ENCODE measurements at regions of chr6 and their contacts with region 1.

Region 1: DNA sequence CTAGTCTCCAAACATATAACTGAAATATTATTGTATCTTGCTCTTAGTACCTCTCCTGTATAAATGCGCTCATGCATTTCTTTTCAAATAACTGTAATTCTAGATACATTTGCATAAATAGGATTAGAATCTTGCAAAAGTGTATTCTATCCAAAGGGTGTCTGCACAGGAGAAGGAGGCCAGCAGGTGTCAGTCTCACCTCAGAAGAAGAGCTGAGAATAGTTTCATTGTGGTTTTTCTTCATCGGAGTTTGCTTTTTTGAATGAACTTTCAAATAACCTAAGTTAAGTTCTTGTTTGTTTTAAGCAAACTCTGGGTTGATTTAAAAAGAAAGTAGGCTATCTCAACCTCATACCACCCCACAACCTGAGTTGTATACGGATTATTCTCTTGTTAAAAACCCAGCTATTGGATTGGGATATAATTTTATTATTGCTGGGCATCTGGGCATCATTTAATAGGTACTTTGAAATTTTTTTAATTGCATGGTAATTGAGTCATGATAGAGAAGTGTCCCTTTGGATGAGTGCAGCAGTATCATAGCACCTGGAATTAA is 125.0 kb upstream of the MLIP start:
- DNase-seq: peak; percentile 53
- H3K4me3 ChIP-seq: no peak overlapping the region
- H3K27ac ChIP-seq: peak overlapping the region in 1 of 4 donors; percentile 5
- H3K4me1 ChIP-seq: peaks cover 0 to 14% (median 5%) of the 10 kb centered on the region in 4 donors
- H3K27me3 ChIP-seq: no peaks in the 10 kb centered on the region
- CTCF ChIP-seq: peak; percentile 61 to 83 (median 77)
- EP300 ChIP-seq: no peak
- POLR2A ChIP-seq: no peak

Region 2: DNA sequence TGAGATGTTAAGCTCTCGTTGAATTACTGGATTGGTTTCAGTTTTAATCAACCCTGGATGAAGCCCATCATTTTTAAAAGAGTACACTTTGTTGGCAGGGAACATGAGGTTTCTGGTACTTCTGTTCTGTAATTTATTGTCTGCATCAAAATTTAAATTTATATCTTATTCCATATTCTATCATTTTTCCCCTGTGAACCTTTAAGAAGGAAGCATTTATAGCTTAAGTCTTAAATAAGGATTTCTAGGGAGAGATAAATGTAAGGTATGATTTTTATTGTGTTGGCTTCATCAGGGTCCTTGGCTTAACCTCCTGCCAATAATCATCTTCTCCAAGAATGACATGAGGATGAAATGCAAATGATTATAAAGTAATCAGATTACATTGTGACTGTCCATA is 165.6 kb after region 1 on chr6:
- in situ Hi-C with region 1: no loop called
- intact Hi-C with region 1: no loop called
- DNase-seq: no peak
- H3K4me3 ChIP-seq: no peak overlapping the region
- H3K27ac ChIP-seq: no peak overlapping the region
- H3K4me1 ChIP-seq: no peaks in the 10 kb centered on the region
- H3K27me3 ChIP-seq: no peaks in the 10 kb centered on the region
- CTCF ChIP-seq: no peak
- EP300 ChIP-seq: no peak
- POLR2A ChIP-seq: no peak

Region 3: GRCh38 chr6:54267798-54268197 is 281.6 kb after region 1 on chr6:
- in situ Hi-C with region 1: loop called (anchors 10 to 25 kb)
- intact Hi-C with region 1: no loop called
- DNase-seq: peak; percentile 19
- H3K4me3 ChIP-seq: no peak overlapping the region
- H3K27ac ChIP-seq: no peak overlapping the region
- H3K4me1 ChIP-seq: no peaks in the 10 kb centered on the region
- H3K27me3 ChIP-seq: no peaks in the 10 kb centered on the region
- CTCF ChIP-seq: peak; percentile 13 to 52 (median 47)
- EP300 ChIP-seq: no peak
- POLR2A ChIP-seq: no peak

Region 4: GRCh38 chr6:55069132-55069781 is 1083.0 kb after region 1 on chr6:
- in situ Hi-C with region 1: loop called in 2 of 4 experiments (anchors 25 kb)
- intact Hi-C with region 1: no loop called
- DNase-seq: peak; percentile 36
- H3K4me3 ChIP-seq: no peak overlapping the region
- H3K27ac ChIP-seq: no peak overlapping the region
- H3K4me1 ChIP-seq: no peaks in the 10 kb centered on the region
- H3K27me3 ChIP-seq: no peaks in the 10 kb centered on the region
- CTCF ChIP-seq: peak; percentile 39 to 77 (median 62)
- EP300 ChIP-seq: no peak
- POLR2A ChIP-seq: no peak

Region 5: DNA sequence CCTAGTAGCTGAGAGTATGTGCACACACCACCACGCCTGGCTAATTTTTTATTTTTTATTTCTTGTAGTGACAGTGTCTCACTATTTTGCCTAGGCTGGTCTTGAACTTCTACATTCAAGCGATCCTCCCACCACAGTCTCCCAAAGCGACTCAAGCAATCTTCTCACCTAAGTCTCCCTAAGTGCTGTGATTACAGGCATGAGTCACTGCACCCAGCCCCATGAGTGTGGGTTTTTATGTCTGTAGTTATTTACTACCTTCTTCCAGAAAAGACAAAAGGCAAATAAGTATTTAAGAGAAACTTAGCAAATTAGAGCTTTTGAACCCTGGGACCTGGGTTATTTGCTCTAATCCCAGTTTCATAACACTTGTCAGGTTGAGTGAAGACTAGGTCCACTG is 1095.8 kb after region 1 on chr6:
- in situ Hi-C with region 1: loop called in 1 of 4 experiments (anchors 25 kb)
- intact Hi-C with region 1: no loop called
- DNase-seq: no peak
- H3K4me3 ChIP-seq: no peak overlapping the region
- H3K27ac ChIP-seq: no peak overlapping the region
- H3K4me1 ChIP-seq: no peaks in the 10 kb centered on the region
- H3K27me3 ChIP-seq: no peaks in the 10 kb centered on the region
- CTCF ChIP-seq: no peak
- EP300 ChIP-seq: no peak
- POLR2A ChIP-seq: no peak

Region 6: DNA sequence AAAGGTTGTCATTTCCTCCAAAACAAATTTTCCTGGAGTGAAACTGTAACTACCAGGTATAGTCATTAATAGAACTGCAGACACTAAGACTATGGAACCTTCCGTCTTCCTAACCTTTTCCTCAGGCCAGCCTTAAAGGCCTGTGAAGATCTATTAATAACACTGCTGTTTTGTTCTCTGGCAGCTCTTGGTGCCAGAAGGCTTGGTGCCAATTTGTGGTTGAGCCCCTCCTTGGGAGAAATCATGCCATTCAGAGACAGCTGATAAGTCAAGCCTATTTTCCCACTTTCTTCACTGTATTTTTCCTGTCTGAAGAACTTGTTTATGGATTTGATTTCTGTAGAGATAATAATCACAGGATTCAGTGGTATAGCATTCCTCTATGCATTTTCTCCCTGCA is 1252.9 kb after region 1 on chr6:
- in situ Hi-C with region 1: loop called (anchors 10 to 25 kb)
- intact Hi-C with region 1: no loop called
- DNase-seq: no peak
- H3K4me3 ChIP-seq: no peak overlapping the region
- H3K27ac ChIP-seq: no peak overlapping the region
- H3K4me1 ChIP-seq: no peaks in the 10 kb centered on the region
- H3K27me3 ChIP-seq: no peaks in the 10 kb centered on the region
- CTCF ChIP-seq: no peak
- EP300 ChIP-seq: no peak
- POLR2A ChIP-seq: no peak

Measured in transverse colon (tissue), 4 donors.